Body of pancreas (tissue), 4 donors: ENCODE measurements at regions of chr1 and their contacts with region 1.

Region 1: DNA sequence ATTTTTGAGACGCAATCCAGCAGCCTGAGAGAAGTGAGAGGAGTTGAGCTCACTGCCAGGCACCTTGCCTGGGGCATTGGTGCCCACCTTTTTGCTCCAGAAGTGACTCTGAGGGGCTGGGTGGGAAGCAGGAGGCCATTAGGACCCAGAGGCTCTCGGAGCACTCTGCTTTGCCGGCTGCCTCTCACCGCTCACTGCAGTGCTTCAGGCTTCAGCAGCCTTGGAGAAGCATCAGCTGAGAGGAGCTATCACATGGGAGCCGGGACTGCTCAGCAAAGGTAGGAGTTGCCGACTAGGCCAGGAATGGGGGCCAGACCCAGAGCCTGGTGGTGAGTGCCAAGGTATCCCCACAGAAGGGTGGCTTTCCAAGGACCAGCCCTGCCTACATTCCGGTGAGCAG is at the start of gene GPR61:
- DNase-seq: no peak
- ATAC-seq: no peak
- H3K4me3 ChIP-seq: no peak within 1 kb of the TSS
- H3K27ac ChIP-seq: no peak within 1 kb of the TSS
- H3K4me1 ChIP-seq: no peaks in the 10 kb centered on the region
- H3K27me3 ChIP-seq: no peaks in the 10 kb centered on the region
- CTCF ChIP-seq: no peak
- POLR2A ChIP-seq: no peak
- total RNA-seq, gene GPR61: not detected

Region 2: GRCh38 chr1:109624201-109625010 is 84.7 kb after region 1 on chr1:
- intact Hi-C with region 1: loop called (anchors 5 kb)
- DNase-seq: no peak
- ATAC-seq: no peak
- H3K4me3 ChIP-seq: no peak overlapping the region
- H3K27ac ChIP-seq: no peak overlapping the region
- H3K4me1 ChIP-seq: peaks cover 33% of the 10 kb centered on the region
- H3K27me3 ChIP-seq: no peaks in the 10 kb centered on the region
- CTCF ChIP-seq: no peak
- POLR2A ChIP-seq: no peak